A549 (cell line): ENCODE measurements at regions of chr12 and their contacts with region 1.

Region 1: GRCh38 chr12:52050761-52051541 is at the start of gene NR4A1:
- DNase-seq: peak; percentile 95 to 98
- ATAC-seq: peak; percentile 67 to 68
- H3K4me3 ChIP-seq: peak within 1 kb of the TSS; percentile 75
- H3K27ac ChIP-seq: peak within 1 kb of the TSS; percentile 90 to 95
- H3K4me1 ChIP-seq: peaks cover 38% of the 10 kb centered on the region
- CTCF ChIP-seq: peak; percentile 34
- EP300 ChIP-seq: peak; percentile 71 to 94
- POLR2A ChIP-seq: peak; percentile 94
- RAD21 ChIP-seq: peak in 1 of 2 experiments; percentile 42; a peak in 3 of 5 replicates
- polyA plus RNA-seq, gene NR4A1: 81.3 and 89.6 TPM in 2 replicates

Region 2: GRCh38 chr12:52032804-52033502 is 18.0 kb before region 1 on chr12:
- CTCF ChIA-PET with region 1: interaction called, 1,730 read pairs
- POLR2A ChIA-PET with region 1: interaction called, 37 read pairs
- DNase-seq: peak; percentile 97
- ATAC-seq: peak; percentile 93 to 94
- H3K4me3 ChIP-seq: peak overlapping the region; percentile 32
- H3K27ac ChIP-seq: peak overlapping the region; percentile 65 to 77
- H3K4me1 ChIP-seq: peaks cover 28% of the 10 kb centered on the region
- CTCF ChIP-seq: no peak
- EP300 ChIP-seq: no peak
- POLR2A ChIP-seq: 0 out of 2 replicates have a peak, but pooled peaks have one; percentile 11
- RAD21 ChIP-seq: no peak

Region 3: GRCh38 chr12:52038447-52038846 is 12.5 kb before region 1 on chr12:
- CTCF ChIA-PET with region 1: interaction called, 1,730 read pairs
- POLR2A ChIA-PET with region 1: interaction called, 37 read pairs
- DNase-seq: no peak
- ATAC-seq: no peak
- H3K4me3 ChIP-seq: no peak overlapping the region
- H3K27ac ChIP-seq: no peak overlapping the region; a peak in 1 of 6 replicates
- H3K4me1 ChIP-seq: peaks cover 10% of the 10 kb centered on the region
- CTCF ChIP-seq: no peak
- EP300 ChIP-seq: no peak
- POLR2A ChIP-seq: no peak
- RAD21 ChIP-seq: no peak

Region 4: GRCh38 chr12:52063981-52064649 is 13.2 kb after region 1 on chr12:
- CTCF ChIA-PET with region 1: interaction called, 1,730 read pairs
- POLR2A ChIA-PET with region 1: interaction called, 26 read pairs
- DNase-seq: peak in 1 of 2 experiments; percentile 70
- ATAC-seq: 0 out of 6 replicates have a peak, but pooled peaks of 1 of the 2 experiments have one; percentile 0
- H3K4me3 ChIP-seq: no peak overlapping the region
- H3K27ac ChIP-seq: peak overlapping the region; percentile 53 to 81; a peak in 5 of 6 replicates
- H3K4me1 ChIP-seq: peaks cover 16% of the 10 kb centered on the region
- CTCF ChIP-seq: no peak
- EP300 ChIP-seq: no peak
- POLR2A ChIP-seq: no peak
- RAD21 ChIP-seq: no peak